MCF 10A (cell line): ENCODE measurements at regions of chr19 and their contacts with region 1.

Region 1: DNA sequence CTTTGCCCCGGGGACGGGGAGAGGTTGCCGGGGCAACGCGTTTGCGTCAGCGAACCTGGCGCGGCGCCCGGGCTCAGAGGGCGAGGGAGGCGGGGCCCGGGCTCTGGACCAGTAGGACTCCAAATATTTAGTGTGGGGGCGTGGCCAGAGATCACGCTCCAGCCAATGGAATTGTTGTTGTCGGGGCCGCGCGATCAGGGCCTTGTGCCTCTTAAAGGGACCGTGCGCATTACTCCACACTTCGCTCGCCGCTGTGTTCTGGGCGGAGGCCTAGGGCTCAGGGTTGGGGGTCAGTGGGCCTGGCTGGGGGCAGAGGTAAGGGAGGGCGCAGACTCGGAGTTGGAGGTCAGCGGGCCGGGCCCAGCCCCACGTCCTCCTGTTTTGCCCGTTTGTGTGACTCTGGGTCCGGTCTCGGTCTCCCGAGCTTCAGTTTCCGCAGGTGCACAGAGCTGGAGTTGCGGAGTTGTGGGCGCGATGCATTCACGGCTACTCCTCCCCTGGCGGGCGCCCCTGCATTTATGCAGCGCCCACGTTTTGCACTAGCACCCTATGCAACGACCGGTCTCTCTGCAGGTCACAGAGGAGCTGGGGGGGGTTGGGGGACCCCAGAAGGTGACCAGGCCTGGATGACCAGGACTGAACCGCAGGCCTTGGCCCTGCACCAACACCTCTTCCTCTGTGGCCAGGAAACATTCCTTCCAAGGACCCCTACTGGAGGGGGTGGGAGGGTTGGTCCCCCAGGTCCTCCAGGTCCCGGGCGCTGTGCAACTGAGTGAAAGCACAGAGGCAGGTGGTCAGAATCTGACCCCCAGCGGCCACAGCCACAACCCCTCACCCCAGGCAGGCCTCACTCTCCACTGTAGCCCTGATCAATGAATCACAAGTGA is 10.7 kb upstream of the MKNK2 start:
- DNase-seq: peak; percentile 99
- H3K4me3 Mint-ChIP-seq: peak overlapping the region; percentile 73
- H3K27ac Mint-ChIP-seq: peak overlapping the region; percentile 19
- H3K4me1 Mint-ChIP-seq: peaks cover 16% of the 10 kb centered on the region
- H3K27me3 Mint-ChIP-seq: no peaks in the 10 kb centered on the region
- CTCF ChIP-seq: no peak

Region 2: GRCh38 chr19:1935484-1936208 is 126.1 kb before region 1 on chr19:
- CTCF ChIA-PET with region 1: no interaction called
- POLR2A ChIA-PET with region 1: no interaction called
- intact Hi-C with region 1: no loop called
- DNase-seq: peak; percentile 27
- H3K4me3 Mint-ChIP-seq: no peak overlapping the region
- H3K27ac Mint-ChIP-seq: no peak overlapping the region
- H3K4me1 Mint-ChIP-seq: no peaks in the 10 kb centered on the region
- H3K27me3 Mint-ChIP-seq: no peaks in the 10 kb centered on the region
- CTCF ChIP-seq: no peak

Region 3: DNA sequence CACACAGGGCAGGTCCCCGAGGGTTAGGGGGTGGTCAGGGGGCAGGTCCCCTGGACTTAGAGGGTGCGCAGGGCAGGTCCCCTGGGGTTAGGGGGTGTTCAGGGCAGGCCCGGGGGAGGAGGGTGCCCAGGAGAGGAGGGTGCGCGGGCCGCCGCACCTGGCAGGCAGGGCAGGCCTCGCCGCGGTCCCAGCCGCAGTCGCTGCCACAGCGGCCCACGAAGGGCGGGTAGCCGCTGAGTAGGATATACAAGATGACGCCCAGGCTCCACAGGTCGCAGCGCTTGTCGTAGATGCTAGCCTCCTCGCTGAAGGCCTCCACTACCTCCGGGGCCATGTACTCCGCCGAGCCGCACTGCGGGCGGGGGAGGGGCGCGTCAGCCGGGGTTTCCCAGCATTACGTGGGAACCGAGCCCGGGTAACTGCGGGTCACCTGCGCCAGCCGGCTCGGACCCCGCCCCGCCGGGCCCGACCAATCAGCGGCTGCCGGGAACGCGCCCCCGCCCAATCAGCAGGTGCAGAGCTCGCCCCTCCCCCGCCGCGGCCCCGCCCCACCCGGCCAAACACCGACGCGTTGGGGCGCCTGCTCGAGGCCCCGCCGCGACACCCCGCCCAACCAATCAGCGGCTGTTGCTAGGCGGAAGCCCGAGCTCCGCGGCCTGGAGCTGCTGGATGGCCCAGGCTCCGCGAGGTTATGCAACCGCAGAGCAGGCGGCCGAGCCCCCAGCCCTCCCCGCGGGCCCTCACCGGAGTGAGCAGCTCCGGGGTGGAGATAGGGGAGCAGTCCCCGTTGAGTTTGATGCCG is 19.9 kb before region 1 on chr19:
- CTCF ChIA-PET with region 1: no interaction called
- POLR2A ChIA-PET with region 1: interaction called, 16 read pairs
- intact Hi-C with region 1: no loop called
- DNase-seq: peak; percentile 97
- H3K4me3 Mint-ChIP-seq: peak overlapping the region; percentile 60
- H3K27ac Mint-ChIP-seq: peak overlapping the region; percentile 35
- H3K4me1 Mint-ChIP-seq: peaks cover 8% of the 10 kb centered on the region
- H3K27me3 Mint-ChIP-seq: no peaks in the 10 kb centered on the region
- CTCF ChIP-seq: no peak

Region 4: GRCh38 chr19:2050991-2051772 is 10.6 kb before region 1 on chr19 and contains the start of gene MKNK2:
- CTCF ChIA-PET with region 1: no interaction called
- POLR2A ChIA-PET with region 1: interaction called, 17 read pairs
- intact Hi-C with region 1: no loop called
- DNase-seq: peak; percentile 90
- H3K4me3 Mint-ChIP-seq: peak within 1 kb of the TSS; percentile 92
- H3K27ac Mint-ChIP-seq: peak within 1 kb of the TSS; percentile 81
- H3K4me1 Mint-ChIP-seq: peaks cover 22% of the 10 kb centered on the region
- H3K27me3 Mint-ChIP-seq: no peaks in the 10 kb centered on the region
- CTCF ChIP-seq: peak; percentile 22
- total RNA-seq, gene MKNK2: 146 and 224 TPM in 2 replicates

Region 5: GRCh38 chr19:2087012-2087620 is 25.4 kb after region 1 on chr19:
- CTCF ChIA-PET with region 1: no interaction called
- POLR2A ChIA-PET with region 1: interaction called, 13 read pairs
- intact Hi-C with region 1: no loop called
- DNase-seq: peak; percentile 96
- H3K4me3 Mint-ChIP-seq: peak overlapping the region; percentile 22
- H3K27ac Mint-ChIP-seq: peak overlapping the region; percentile 63
- H3K4me1 Mint-ChIP-seq: peaks cover 42% of the 10 kb centered on the region
- H3K27me3 Mint-ChIP-seq: no peaks in the 10 kb centered on the region
- CTCF ChIP-seq: no peak

Region 6: GRCh38 chr19:2123682-2124387 is 62.1 kb after region 1 on chr19:
- CTCF ChIA-PET with region 1: no interaction called
- POLR2A ChIA-PET with region 1: no interaction called
- intact Hi-C with region 1: no loop called
- DNase-seq: no peak
- H3K4me3 Mint-ChIP-seq: no peak overlapping the region
- H3K27ac Mint-ChIP-seq: no peak overlapping the region
- H3K4me1 Mint-ChIP-seq: no peaks in the 10 kb centered on the region
- H3K27me3 Mint-ChIP-seq: no peaks in the 10 kb centered on the region
- CTCF ChIP-seq: no peak

Region 7: GRCh38 chr19:2135474-2136402 is 74.0 kb after region 1 on chr19:
- CTCF ChIA-PET with region 1: no interaction called
- POLR2A ChIA-PET with region 1: no interaction called
- intact Hi-C with region 1: no loop called
- DNase-seq: no peak
- H3K4me3 Mint-ChIP-seq: no peak overlapping the region
- H3K27ac Mint-ChIP-seq: no peak overlapping the region
- H3K4me1 Mint-ChIP-seq: no peaks in the 10 kb centered on the region
- H3K27me3 Mint-ChIP-seq: no peaks in the 10 kb centered on the region
- CTCF ChIP-seq: no peak